ENCODE measurements at regions of chr14 and their contacts with region 1.

Region 1: DNA sequence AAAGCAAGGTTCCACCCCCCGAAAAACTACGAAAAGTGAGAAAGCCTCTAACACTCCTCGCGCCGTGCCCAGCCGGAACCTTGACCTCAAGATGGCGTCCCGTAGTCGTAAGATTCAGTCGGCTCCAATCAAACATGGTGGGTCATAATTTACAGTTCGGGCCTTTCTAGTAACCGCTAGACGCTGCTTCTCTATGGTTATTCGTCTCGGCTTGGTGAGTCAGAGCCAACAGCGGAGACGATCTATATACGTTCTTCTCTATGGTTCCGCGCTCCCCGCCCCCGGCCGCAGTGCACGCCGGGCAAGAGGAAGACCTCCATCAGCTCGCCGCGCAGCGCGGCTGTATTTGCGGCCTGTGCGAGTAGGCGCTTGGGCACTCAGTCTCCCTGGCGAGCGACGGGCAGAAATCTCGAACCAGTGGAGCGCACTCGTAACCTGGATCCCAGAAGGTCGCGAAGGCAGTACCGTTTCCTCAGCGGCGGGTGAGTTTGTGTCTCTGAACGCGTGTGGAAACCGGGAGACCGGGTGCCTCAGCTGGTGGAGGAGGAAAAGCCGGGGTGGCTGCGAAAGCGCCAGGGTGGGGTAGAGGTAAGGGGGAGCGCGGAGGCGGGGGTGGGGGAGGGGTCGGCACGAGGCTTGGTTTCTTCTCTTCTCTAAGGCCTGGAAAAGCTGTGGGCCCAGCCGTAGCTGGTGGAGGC is at the start of gene RBM25:
- DNase-seq: peak; percentile 97
- H3K4me3 ChIP-seq: peak within 1 kb of the TSS; percentile 94
- H3K27ac ChIP-seq: peak within 1 kb of the TSS; percentile 92
- H3K27me3 ChIP-seq: no peaks in the 10 kb centered on the region
- CTCF ChIP-seq: no peak
- polyA plus RNA-seq, gene RBM25: 48.2 and 52.4 TPM in 2 replicates

Region 2: GRCh38 chr14:72952171-72952570 is 106.2 kb before region 1 on chr14:
- CTCF ChIA-PET with region 1: no interaction called
- POLR2A ChIA-PET with region 1: no interaction called
- DNase-seq: no peak
- H3K4me3 ChIP-seq: no peak overlapping the region
- H3K27ac ChIP-seq: no peak overlapping the region
- H3K27me3 ChIP-seq: no peaks in the 10 kb centered on the region
- CTCF ChIP-seq: no peak

Region 3: GRCh38 chr14:73026845-73027542 is 31.4 kb before region 1 on chr14 and contains the start of gene ZFYVE1:
- CTCF ChIA-PET with region 1: no interaction called
- POLR2A ChIA-PET with region 1: interaction called, 21 read pairs
- DNase-seq: peak; percentile 97
- H3K4me3 ChIP-seq: peak within 1 kb of the TSS; percentile 82
- H3K27ac ChIP-seq: peak within 1 kb of the TSS; percentile 68
- H3K27me3 ChIP-seq: no peaks in the 10 kb centered on the region
- CTCF ChIP-seq: no peak
- polyA plus RNA-seq, gene ZFYVE1: 24.5 and 27.4 TPM in 2 replicates

Region 4: GRCh38 chr14:73069585-73069984 is 11.2 kb after region 1 on chr14:
- CTCF ChIA-PET with region 1: no interaction called
- POLR2A ChIA-PET with region 1: interaction called, 10 read pairs
- DNase-seq: no peak
- H3K4me3 ChIP-seq: no peak overlapping the region
- H3K27ac ChIP-seq: no peak overlapping the region
- H3K27me3 ChIP-seq: no peaks in the 10 kb centered on the region
- CTCF ChIP-seq: no peak

Region 5: GRCh38 chr14:73261520-73262426 is 203.4 kb after region 1 on chr14:
- CTCF ChIA-PET with region 1: no interaction called
- POLR2A ChIA-PET with region 1: no interaction called
- DNase-seq: no peak
- H3K4me3 ChIP-seq: no peak overlapping the region
- H3K27ac ChIP-seq: no peak overlapping the region
- H3K27me3 ChIP-seq: no peaks in the 10 kb centered on the region
- CTCF ChIP-seq: no peak

Measured in AG04450 (cell line).